ENCODE measurements at regions of chr14 and their contacts with region 1.

Region 1: DNA sequence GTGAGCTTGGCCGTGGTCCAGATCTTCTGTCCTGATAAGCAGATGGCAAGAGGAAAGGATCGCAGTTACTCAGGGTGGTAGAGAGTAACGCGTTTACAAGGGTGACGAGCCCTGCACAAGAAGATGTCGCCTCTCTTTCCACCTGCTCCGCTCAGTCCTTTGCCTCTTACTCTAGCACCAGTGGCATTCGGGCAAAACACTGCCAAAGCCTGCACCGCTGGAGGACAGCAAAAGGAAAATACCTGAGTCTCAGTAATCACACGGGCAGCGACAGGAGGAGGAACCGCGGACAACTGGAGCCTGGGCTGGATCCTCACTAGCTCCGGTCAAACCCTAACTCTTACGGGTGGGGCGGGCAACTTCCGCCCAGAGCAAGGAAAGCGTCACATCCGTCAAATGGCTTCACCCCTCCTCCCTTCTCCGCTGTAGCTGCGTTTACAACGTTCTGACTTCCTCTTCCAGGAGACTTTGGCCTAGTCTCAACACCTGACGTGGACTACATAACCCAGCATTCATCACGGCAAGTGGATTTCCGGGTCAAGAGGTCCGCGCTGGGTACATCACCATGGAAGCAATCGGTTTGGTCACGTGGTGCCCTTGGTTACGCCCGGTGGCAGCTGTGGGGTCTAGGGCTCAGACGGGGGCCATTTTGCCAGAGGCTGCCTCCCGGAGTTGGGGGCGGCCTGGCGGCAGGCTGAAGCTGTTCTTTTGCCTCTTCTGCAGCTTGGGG is at the starts of genes KLHL28 and TOGARAM1:
- DNase-seq: peak; percentile 99
- ATAC-seq: peak; percentile 90
- H3K4me3 Mint-ChIP-seq: no peak within 1 kb of the TSS
- H3K27ac Mint-ChIP-seq: no peak within 1 kb of the TSS
- H3K4me1 Mint-ChIP-seq: peaks cover 54% of the 10 kb centered on the region
- H3K27me3 Mint-ChIP-seq: no peaks in the 10 kb centered on the region
- total RNA-seq, gene KLHL28: 13.9 to 15.2 TPM
- total RNA-seq, gene TOGARAM1: 8.9 to 9.5 TPM

Region 2: GRCh38 chr14:44866322-44866721 is 95.4 kb before region 1 on chr14:
- CTCF ChIA-PET with region 1: no interaction called
- POLR2A ChIA-PET with region 1: no interaction called
- DNase-seq: no peak
- ATAC-seq: no peak
- H3K4me3 Mint-ChIP-seq: no peak overlapping the region
- H3K27ac Mint-ChIP-seq: no peak overlapping the region
- H3K4me1 Mint-ChIP-seq: no peaks in the 10 kb centered on the region
- H3K27me3 Mint-ChIP-seq: no peaks in the 10 kb centered on the region

Region 3: GRCh38 chr14:44897045-44897844 is 64.5 kb before region 1 on chr14:
- CTCF ChIA-PET with region 1: interaction called, 5 read pairs
- POLR2A ChIA-PET with region 1: interaction called, 23 read pairs
- DNase-seq: peak; percentile 99
- ATAC-seq: peak; percentile 98
- H3K4me3 Mint-ChIP-seq: peak overlapping the region; percentile 89
- H3K27ac Mint-ChIP-seq: peak overlapping the region; percentile 93
- H3K4me1 Mint-ChIP-seq: peaks cover 22% of the 10 kb centered on the region
- H3K27me3 Mint-ChIP-seq: no peaks in the 10 kb centered on the region

Region 4: GRCh38 chr14:44912041-44912869 is 49.5 kb before region 1 on chr14:
- CTCF ChIA-PET with region 1: interaction called, 10 read pairs
- POLR2A ChIA-PET with region 1: interaction called, 5 read pairs
- DNase-seq: no peak
- ATAC-seq: peak; percentile 54
- H3K4me3 Mint-ChIP-seq: no peak overlapping the region
- H3K27ac Mint-ChIP-seq: no peak overlapping the region
- H3K4me1 Mint-ChIP-seq: peaks cover 3% of the 10 kb centered on the region
- H3K27me3 Mint-ChIP-seq: peaks cover 25% of the 10 kb centered on the region

Region 5: DNA sequence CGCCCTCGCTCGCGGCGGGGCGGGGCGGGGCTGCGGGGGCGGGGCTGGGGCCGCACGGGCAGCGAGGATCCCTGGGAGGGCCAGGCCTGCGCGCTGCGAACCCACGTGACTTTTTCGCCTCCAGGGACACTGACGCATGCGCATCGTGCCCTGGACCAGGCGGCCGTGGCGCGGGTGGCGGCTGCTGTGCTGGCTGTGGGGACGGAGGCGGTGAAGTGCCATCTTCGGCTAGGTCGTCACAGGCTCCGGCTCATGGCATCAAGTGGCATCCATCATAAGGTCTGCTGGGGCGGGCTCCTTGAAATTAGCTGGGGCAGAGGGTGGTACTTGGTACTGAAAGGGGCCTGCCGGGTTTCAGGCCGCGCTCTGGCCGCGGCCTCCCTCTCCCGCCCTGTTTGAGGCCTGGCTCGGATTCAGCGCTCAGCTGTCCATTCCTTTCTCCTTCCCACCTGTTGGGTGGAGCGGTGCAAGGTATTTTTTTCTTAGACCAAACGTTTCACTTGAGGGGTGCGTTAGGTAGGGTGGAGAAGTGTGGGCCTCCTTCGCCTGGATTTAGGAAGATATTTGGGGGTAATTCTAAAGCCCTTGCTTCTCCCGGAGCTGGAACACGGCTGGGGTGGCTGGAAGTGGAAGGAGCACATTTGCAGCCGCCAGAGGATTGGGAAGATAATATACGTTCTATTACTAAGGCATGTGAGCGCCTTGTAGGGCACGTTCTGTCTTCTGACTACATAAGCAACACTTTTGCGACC is 122.4 kb after region 1 on chr14 and contains the start of gene PRPF39:
- CTCF ChIA-PET with region 1: interaction called, 3 read pairs
- POLR2A ChIA-PET with region 1: interaction called, 13 read pairs
- DNase-seq: peak; percentile 95
- ATAC-seq: peak; percentile 97
- H3K4me3 Mint-ChIP-seq: peak within 1 kb of the TSS; percentile 94
- H3K27ac Mint-ChIP-seq: peak within 1 kb of the TSS; percentile 95
- H3K4me1 Mint-ChIP-seq: peaks cover 50% of the 10 kb centered on the region
- H3K27me3 Mint-ChIP-seq: no peaks in the 10 kb centered on the region
- total RNA-seq, gene PRPF39: 41.0 to 41.6 TPM

Region 6: DNA sequence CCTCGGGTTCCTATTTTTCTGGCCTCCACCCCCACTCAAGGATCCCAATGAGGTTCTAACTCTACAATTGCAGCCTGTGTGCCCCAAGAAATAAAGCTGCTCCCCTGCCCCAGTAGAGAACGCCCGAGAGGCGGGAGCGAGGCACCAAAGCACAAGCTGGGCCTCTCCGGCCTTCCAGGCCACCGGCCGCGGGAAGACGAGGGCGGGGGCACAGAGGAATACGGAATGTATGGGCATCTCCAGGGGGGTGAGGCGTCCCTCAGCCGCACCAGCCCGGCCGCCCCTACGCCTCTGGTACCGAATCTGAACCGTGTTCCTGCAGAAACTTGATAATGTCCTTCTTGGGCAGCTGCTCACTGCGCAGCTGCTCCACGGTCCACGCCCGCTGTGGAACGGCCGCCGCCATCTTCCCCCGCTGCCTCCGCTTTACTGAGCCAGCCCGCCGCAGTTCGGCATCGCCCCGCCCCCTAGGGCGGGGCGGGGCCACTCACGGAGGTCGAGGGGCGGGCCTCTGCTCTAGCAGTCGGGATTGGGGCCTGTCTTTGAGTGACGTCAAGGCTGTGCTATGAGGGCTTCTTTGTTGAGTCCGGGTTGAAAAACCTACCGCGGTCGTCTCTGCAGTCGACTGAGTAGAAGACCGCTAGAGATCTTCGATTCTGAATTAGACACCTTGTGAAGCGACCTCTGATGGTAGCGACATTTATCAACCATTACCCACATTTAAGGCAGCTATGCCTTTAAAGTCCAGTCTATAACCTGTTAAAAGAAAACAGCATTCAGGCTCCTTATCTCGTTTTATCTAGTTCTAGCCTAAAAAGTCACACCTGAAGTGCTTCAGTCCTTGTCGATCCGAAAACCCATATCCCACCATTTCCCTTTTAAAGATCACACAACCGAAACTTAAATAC is 172.5 kb after region 1 on chr14 and contains the start of gene FKBP3:
- CTCF ChIA-PET with region 1: no interaction called
- POLR2A ChIA-PET with region 1: interaction called, 31 read pairs
- DNase-seq: peak; percentile 98
- ATAC-seq: peak; percentile 95
- H3K4me3 Mint-ChIP-seq: peak within 1 kb of the TSS; percentile 90
- H3K27ac Mint-ChIP-seq: peak within 1 kb of the TSS; percentile 97
- H3K4me1 Mint-ChIP-seq: peaks cover 36% of the 10 kb centered on the region
- H3K27me3 Mint-ChIP-seq: no peaks in the 10 kb centered on the region
- total RNA-seq, gene FKBP3: 70.2 to 74.9 TPM

Region 7: GRCh38 chr14:45253068-45253753 is 291.4 kb after region 1 on chr14 and contains the start of gene MIS18BP1:
- CTCF ChIA-PET with region 1: no interaction called
- POLR2A ChIA-PET with region 1: interaction called, 11 read pairs
- DNase-seq: peak; percentile 97
- ATAC-seq: peak; percentile 95
- H3K4me3 Mint-ChIP-seq: peak within 1 kb of the TSS; percentile 84
- H3K27ac Mint-ChIP-seq: peak within 1 kb of the TSS; percentile 98
- H3K4me1 Mint-ChIP-seq: peaks cover 26% of the 10 kb centered on the region
- H3K27me3 Mint-ChIP-seq: peaks cover 2% of the 10 kb centered on the region
- total RNA-seq, gene MIS18BP1: 66.4 to 71.8 TPM

Measured in activated CD8-positive, alpha-beta T cell treated with anti-CD3 and anti-CD28 coated beads, Interleukin-2, amount 10 ng/mL, durations not matched to agents 7 days and 5 days (primary cell).